CD4-positive, alpha-beta memory T cell (primary cell): ENCODE measurements at regions of chr9 and their contacts with region 1.

Region 1: DNA sequence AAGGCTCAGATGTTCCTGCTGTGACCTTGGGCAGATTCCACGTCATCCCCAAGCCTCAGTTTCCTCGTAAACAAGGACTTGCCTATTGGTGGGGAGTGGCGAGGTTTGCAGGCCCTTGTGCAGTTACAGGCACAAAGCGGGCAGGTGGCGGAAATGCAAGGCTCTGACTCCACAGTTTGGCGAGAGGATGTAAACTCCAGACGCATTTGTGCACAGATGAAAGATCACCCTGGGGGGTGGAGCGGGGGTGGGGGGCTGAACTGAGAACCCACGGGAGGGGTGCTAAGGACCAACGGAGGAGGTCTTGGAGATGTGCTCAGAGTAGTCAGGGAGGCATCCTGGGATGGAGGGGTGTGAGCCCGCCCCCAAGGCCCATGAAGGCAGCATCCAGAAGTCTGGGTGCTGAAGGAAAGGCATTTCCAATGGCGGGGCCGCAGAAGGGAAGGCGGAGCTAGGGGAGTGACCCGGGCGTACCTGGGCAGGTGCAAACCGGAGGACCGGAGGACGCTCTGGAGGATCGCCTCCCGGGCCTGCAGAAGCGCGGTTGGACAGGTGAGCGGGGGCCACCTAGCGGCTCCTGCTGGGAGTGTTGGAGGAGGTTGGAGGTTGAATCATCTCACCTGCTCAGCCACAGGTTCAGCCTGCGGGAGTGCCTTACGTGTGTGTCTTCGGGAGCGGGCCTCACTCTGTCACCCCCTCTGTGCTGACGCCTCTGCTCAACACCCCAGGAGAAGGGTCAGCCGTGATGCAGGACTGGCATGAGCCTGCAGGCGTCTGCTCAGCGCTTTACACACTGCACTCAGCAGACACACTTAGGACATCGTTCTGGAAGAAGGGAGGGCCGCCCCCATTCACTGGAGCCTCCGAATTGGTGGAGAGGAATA is 1.9 kb upstream of the FIBCD1 start:
- DNase-seq: peak; percentile 50 to 68 (median 58)
- H3K4me3 ChIP-seq: no peak overlapping the region
- H3K4me3 Mint-ChIP-seq: peak overlapping the region in 5 of 8 donors; percentile 52 to 77 (median 64)
- H3K27ac ChIP-seq: no peak overlapping the region
- H3K27ac Mint-ChIP-seq: no peak overlapping the region
- H3K4me1 ChIP-seq: peaks cover 12% of the 10 kb centered on the region
- H3K4me1 Mint-ChIP-seq: peaks cover 3 to 18% (median 10%) of the 10 kb centered on the region in 4 donors
- H3K27me3 ChIP-seq: peaks cover 37% of the 10 kb centered on the region
- H3K27me3 Mint-ChIP-seq: peaks cover 27 to 42% of the 10 kb centered on the region in 2 donors

Region 2: DNA sequence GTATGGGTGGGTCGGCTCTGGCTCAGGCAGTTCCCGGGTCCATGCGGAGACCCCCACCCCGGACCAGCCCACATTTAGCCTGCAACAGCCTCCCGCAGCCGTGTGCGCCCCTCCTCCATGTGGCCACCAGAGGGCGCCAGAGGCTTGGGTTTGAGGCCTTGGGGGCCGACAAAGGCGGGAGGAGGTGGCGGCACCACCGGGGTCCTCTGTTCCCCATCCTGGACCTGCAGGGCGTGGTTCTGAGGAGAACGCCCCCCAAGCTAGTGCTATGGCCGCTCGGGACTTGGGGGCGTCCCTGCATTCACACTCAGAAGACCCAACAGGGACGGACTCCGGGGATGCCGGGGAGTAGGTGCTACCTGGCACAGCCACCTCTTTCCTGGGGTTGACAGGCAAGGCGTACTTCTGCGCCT is 479.7 kb before region 1 on chr9:
- CTCF ChIA-PET with region 1: no interaction called
- POLR2A ChIA-PET with region 1: no interaction called
- intact Hi-C with region 1: loop called (anchors 5 kb)
- DNase-seq: peak; percentile 53 to 68 (median 58)
- H3K4me3 ChIP-seq: no peak overlapping the region
- H3K4me3 Mint-ChIP-seq: no peak overlapping the region
- H3K27ac ChIP-seq: no peak overlapping the region
- H3K27ac Mint-ChIP-seq: no peak overlapping the region
- H3K4me1 ChIP-seq: no peaks in the 10 kb centered on the region
- H3K4me1 Mint-ChIP-seq: no peaks in the 10 kb centered on the region
- H3K27me3 ChIP-seq: no peaks in the 10 kb centered on the region
- H3K27me3 Mint-ChIP-seq: peaks cover 7 to 9% of the 10 kb centered on the region in 2 donors

Region 3: GRCh38 chr9:130707225-130707976 is 233.5 kb before region 1 on chr9:
- CTCF ChIA-PET with region 1: interaction called, 10 read pairs
- POLR2A ChIA-PET with region 1: no interaction called
- intact Hi-C with region 1: no loop called
- DNase-seq: peak; percentile 66 to 72 (median 67)
- H3K4me3 ChIP-seq: no peak overlapping the region
- H3K4me3 Mint-ChIP-seq: no peak overlapping the region
- H3K27ac ChIP-seq: no peak overlapping the region
- H3K27ac Mint-ChIP-seq: peak overlapping the region in 5 of 7 donors; percentile 6 to 79 (median 60)
- H3K4me1 ChIP-seq: peaks cover 5% of the 10 kb centered on the region
- H3K4me1 Mint-ChIP-seq: peaks cover under 1 to 7% (median 4%) of the 10 kb centered on the region in 4 donors
- H3K27me3 ChIP-seq: no peaks in the 10 kb centered on the region
- H3K27me3 Mint-ChIP-seq: no peaks in the 10 kb centered on the region

Region 4: DNA sequence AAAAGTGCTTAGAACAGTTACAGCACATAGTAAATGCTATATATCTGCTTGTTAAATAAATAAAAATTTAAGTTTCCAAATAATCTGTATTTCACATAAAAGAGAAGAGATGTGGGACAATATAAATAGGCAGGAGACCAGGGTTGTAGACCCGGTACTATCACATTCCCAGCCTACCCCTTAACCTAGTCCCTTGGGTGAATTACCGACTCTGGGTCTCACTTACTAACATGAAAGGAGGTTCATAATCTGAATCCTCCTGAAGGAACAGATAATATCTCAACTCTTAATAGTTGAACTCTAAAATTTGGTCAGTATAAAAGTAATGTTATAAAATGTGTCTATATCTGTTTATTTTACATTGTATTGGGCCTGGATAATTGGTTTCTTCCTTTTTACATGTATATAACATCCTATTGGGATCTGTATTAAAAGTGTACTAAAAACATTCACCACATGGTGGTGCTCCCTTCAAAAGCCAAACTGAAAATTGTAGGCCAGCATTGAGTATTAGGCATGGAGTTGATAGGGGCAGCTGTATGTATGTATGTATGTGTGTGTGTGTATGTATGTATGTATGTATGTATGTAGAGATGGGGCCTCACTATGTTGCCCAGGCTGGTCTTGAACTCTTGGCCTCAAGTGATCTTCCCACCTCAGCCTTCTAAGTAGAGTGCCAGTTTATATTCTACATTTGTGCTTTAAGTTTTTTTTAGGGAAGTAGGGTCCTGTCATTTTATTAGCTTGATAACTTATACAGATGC is 170.1 kb before region 1 on chr9:
- CTCF ChIA-PET with region 1: no interaction called
- POLR2A ChIA-PET with region 1: no interaction called
- intact Hi-C with region 1: loop called (anchors 1 kb)
- DNase-seq: peak in 4 of 5 donors; percentile 11 to 24 (median 22)
- H3K4me3 ChIP-seq: no peak overlapping the region
- H3K4me3 Mint-ChIP-seq: no peak overlapping the region
- H3K27ac ChIP-seq: no peak overlapping the region
- H3K27ac Mint-ChIP-seq: no peak overlapping the region
- H3K4me1 ChIP-seq: no peaks in the 10 kb centered on the region
- H3K4me1 Mint-ChIP-seq: peaks cover 22 to 38% (median 34%) of the 10 kb centered on the region in 4 donors
- H3K27me3 ChIP-seq: no peaks in the 10 kb centered on the region
- H3K27me3 Mint-ChIP-seq: no peaks in the 10 kb centered on the region

Region 5: DNA sequence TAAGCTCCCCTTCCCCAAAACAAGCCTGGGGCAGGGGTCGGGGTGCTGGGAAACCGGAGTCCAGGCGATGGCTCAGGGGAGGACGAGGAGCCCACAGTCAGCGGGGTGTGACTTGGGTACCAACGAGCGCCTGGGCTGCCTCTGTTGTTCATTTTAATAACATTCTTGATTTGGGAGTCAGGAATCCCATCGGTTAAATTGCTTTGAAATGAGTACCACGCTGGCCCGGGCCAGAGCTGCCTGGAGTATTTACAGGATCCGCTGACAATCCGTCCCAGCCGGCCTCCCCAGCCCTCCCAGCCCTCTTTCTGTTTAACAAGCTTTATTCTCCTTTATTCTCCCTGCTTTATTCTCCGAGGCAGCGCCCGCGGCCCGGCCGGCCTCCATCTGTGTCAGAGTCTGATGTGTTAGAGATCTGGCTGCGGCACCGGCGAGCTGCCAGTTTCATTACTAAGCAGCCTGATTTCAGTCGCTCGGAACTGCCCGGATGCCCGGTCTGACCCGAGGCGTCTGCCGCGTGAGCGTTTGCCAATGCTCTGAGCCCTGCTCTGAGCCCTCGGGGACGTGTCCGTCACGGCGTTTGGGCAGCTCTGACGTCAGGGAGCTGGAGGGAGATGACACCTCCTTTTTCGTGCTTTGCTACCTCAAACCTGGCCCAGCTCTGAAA is 27.9 kb before region 1 on chr9:
- CTCF ChIA-PET with region 1: no interaction called
- POLR2A ChIA-PET with region 1: no interaction called
- intact Hi-C with region 1: no loop called
- DNase-seq: peak in 1 of 5 donors; percentile 9
- H3K4me3 ChIP-seq: no peak overlapping the region
- H3K4me3 Mint-ChIP-seq: no peak overlapping the region
- H3K27ac ChIP-seq: no peak overlapping the region
- H3K27ac Mint-ChIP-seq: no peak overlapping the region
- H3K4me1 ChIP-seq: no peaks in the 10 kb centered on the region
- H3K4me1 Mint-ChIP-seq: peaks cover 0 to 4% (median 0%) of the 10 kb centered on the region in 4 donors
- H3K27me3 ChIP-seq: peaks cover 10% of the 10 kb centered on the region
- H3K27me3 Mint-ChIP-seq: no peaks in the 10 kb centered on the region